PC-9 (cell line): ENCODE measurements at regions of chr1 and their contacts with region 1.

Region 1: DNA sequence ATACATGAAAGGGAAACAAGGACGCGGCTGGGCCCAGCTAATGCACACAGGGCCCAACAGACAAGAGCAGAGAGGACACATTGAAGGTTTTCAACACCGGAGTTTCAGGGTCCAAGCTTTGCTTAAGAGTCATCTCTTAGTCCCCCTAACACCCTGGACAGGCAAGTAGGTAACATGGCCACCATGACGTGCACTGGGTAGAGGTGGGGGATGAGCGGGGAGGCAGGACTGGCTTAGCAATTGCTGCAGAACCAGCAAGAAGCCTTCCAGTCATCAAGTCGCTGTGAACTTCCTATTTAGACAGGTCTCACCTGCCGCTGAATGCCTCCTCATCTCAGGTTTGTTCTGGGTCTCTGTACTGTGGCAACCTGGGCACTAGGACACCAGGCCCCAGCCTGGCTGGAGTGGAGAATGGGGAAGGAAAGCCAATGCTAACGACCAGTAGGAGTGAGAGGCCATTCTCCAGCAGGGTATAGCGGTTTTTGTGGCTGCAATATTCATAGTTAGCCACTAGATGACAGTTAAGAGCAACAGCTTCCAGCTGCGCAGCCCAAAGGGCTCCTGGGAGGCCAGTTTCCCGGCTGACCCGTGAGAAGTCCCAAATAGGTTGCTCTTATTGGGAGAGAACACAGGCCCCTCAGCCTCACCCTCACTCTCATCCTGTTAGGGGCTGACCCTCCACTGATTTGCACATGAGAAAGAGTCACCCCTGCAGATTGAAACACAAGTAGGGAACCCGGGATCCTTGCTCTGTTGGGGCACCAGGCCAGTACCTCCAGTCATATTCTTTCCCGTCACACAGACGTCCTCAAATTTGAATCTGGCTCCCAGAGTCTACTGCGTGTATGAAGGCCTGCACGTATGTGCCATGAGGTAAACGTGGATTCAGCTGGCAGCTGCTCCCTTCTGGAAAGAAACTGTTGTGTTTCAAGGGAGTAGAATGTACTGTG is 6.0 kb upstream of the PIGC start:
- DNase-seq: peak; percentile 42 to 52
- H3K4me3 ChIP-seq: peak overlapping the region; percentile 38; the same call in 1 of the 2 replicates
- H3K27ac ChIP-seq: peak overlapping the region; percentile 91
- H3K4me1 ChIP-seq: peaks cover 67% of the 10 kb centered on the region
- H3K27me3 ChIP-seq: no peaks in the 10 kb centered on the region
- CTCF ChIP-seq: peak; percentile 76

Region 2: GRCh38 chr1:172588296-172589291 is 138.7 kb after region 1 on chr1:
- CTCF ChIA-PET with region 1: no interaction called
- POLR2A ChIA-PET with region 1: no interaction called
- intact Hi-C with region 1: loop called (anchors 2 kb)
- DNase-seq: peak; percentile 58 to 90
- H3K4me3 ChIP-seq: peak overlapping the region; percentile 35
- H3K27ac ChIP-seq: peak overlapping the region; percentile 78
- H3K4me1 ChIP-seq: peaks cover 44% of the 10 kb centered on the region
- H3K27me3 ChIP-seq: no peaks in the 10 kb centered on the region
- CTCF ChIP-seq: no peak